Activated CD4-positive, alpha-beta T cell treated with anti-CD3 and anti-CD28 coated beads for 36 hours (primary cell): ENCODE measurements at regions of chr12 and their contacts with region 1.

Region 1: DNA sequence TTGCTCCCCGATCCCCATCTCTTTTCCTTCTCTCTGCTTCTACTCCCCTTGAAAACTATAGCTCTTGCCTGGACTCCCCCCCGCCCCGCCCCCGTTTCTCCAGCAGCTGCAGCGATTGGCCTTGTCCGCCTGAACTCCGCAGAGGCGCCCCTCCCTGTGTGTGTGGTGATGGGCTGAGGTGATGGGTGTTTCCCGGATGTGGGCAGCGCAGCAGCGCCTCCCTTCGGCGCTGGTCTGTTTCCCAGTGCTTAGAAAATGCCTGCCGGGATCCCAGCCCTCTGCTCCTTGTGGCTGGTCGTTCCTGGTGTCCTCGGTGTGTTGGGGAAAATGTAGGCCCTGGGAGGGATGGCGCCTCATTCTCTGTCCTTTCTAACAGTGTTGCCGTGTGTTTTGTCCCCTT is 43.3 kb downstream of the GALNT8 start:
- DNase-seq: peak; percentile 29
- ATAC-seq: no peak
- H3K4me3 Mint-ChIP-seq: no peak overlapping the region
- H3K27ac Mint-ChIP-seq: no peak overlapping the region
- H3K4me1 Mint-ChIP-seq: no peaks in the 10 kb centered on the region
- H3K27me3 Mint-ChIP-seq: peaks cover 2% of the 10 kb centered on the region

Region 2: GRCh38 chr12:4356041-4356327 is 407.6 kb before region 1 on chr12:
- CTCF ChIA-PET with region 1: interaction called, 3 read pairs
- POLR2A ChIA-PET with region 1: no interaction called
- intact Hi-C with region 1: loop called in 1 of 2 experiments (anchors 1 kb)
- DNase-seq: peak; percentile 85
- ATAC-seq: peak; percentile 73
- H3K4me3 Mint-ChIP-seq: no peak overlapping the region
- H3K27ac Mint-ChIP-seq: no peak overlapping the region
- H3K4me1 Mint-ChIP-seq: no peaks in the 10 kb centered on the region
- H3K27me3 Mint-ChIP-seq: no peaks in the 10 kb centered on the region

Region 3: DNA sequence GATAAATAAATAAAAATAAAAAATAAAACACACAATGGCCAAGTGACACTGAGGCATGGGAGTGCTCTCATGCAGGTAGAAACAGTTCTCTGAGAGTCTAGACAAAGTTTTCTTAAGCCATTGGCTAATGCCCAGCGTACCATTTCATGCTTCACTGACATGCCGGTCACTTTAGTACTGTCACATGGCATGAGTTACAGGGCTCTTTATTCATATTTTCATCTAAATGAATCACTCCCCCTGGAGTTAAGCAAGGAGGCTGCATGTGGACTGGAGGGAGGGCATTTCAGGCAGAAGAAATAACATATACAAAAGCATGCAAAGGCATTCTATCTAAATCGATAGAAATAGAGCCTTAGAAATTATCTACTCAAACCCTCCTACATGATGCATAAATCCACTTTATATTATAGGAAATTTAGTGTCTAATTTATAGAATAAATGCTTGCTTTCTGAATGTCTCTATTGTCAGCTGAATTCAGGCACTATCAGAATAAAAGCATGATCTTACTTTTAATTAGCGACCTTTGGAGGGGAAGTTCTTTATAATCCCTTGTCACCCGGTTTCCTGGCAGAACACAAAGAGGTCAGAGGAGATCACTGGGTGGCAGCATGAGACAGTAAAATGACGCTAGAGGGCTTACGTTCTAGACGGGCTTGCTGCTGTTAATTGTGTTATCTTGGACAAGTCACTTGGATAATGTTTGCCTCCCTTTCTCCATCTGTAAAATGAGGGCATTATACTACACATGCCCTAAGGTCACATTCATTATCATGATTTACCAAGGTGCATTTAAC is 184.0 kb before region 1 on chr12:
- CTCF ChIA-PET with region 1: interaction called, 4 read pairs
- POLR2A ChIA-PET with region 1: no interaction called
- intact Hi-C with region 1: loop called in 1 of 2 experiments (anchors 2 kb)
- DNase-seq: peak; percentile 16
- ATAC-seq: no peak
- H3K4me3 Mint-ChIP-seq: no peak overlapping the region
- H3K27ac Mint-ChIP-seq: no peak overlapping the region
- H3K4me1 Mint-ChIP-seq: no peaks in the 10 kb centered on the region
- H3K27me3 Mint-ChIP-seq: peaks cover 2% of the 10 kb centered on the region

Region 4: DNA sequence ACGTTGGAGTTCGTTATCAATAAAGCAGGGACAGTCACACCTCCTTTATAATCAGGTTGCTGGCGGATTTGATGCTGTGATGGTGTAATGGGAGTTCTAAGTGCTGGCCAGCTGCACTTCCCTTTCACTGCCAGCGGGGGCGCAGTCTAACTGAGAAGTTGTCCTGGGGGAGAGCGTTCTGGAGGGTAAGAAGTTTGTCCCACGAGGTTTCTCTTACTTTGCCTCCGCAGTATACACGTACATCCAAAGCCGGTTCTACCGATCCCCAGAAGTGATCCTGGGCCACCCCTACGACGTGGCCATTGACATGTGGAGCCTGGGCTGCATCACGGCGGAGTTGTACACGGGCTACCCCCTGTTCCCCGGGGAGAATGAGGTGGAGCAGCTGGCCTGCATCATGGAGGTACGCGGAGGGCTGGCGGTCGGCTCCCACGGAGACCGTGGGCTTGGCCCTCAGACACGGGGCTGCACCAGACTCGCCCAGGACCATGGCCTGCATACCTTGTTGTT is 158.8 kb before region 1 on chr12:
- CTCF ChIA-PET with region 1: interaction called, 5 read pairs
- POLR2A ChIA-PET with region 1: no interaction called
- intact Hi-C with region 1: loop called (anchors 2 kb)
- DNase-seq: peak; percentile 90
- ATAC-seq: peak; percentile 98
- H3K4me3 Mint-ChIP-seq: peak overlapping the region; percentile 95
- H3K27ac Mint-ChIP-seq: peak overlapping the region; percentile 96
- H3K4me1 Mint-ChIP-seq: peaks cover 18% of the 10 kb centered on the region
- H3K27me3 Mint-ChIP-seq: no peaks in the 10 kb centered on the region